ENCODE measurements at regions of chr1 and their contacts with region 1.

Region 1: GRCh38 chr1:186482661-186483255 is 21.8 kb upstream of the PDC start:
- DNase-seq: peak in 1 of 2 experiments; percentile 85
- H3K4me3 ChIP-seq: no peak overlapping the region
- H3K27ac ChIP-seq: no peak overlapping the region
- H3K4me1 ChIP-seq: no peaks in the 10 kb centered on the region
- H3K27me3 ChIP-seq: no peaks in the 10 kb centered on the region
- CTCF ChIP-seq: peak; percentile 74 to 89 (median 81)
- EP300 ChIP-seq: no peak
- POLR2A ChIP-seq: no peak
- RAD21 ChIP-seq: peak; percentile 96 to 99

Region 2: GRCh38 chr1:186337554-186337953 is 145.2 kb before region 1 on chr1:
- CTCF ChIA-PET with region 1: no interaction called
- POLR2A ChIA-PET with region 1: no interaction called
- DNase-seq: no peak
- H3K4me3 ChIP-seq: no peak overlapping the region
- H3K27ac ChIP-seq: no peak overlapping the region
- H3K4me1 ChIP-seq: no peaks in the 10 kb centered on the region
- H3K27me3 ChIP-seq: no peaks in the 10 kb centered on the region
- CTCF ChIP-seq: no peak
- EP300 ChIP-seq: no peak
- POLR2A ChIP-seq: no peak
- RAD21 ChIP-seq: no peak

Region 3: DNA sequence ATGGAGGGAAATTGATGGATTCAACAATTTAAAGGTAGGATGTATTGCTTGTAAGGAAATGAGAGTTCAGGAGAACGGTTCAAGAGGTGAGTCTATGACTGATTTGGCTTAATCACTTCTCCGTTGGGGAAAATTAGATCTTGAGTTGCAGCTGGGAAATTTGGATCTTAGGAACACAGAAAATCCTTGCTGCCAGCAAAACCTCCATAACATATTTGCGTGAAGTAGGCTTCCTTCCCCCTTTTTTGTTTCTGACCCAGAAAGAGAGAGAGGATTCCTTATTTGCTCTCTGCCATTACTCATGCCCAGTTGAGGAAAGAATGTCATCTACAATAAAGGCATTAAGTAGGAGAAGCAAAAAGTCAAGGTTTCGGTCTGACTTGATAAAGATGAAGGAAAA is 51.6 kb after region 1 on chr1:
- CTCF ChIA-PET with region 1: no interaction called
- POLR2A ChIA-PET with region 1: no interaction called
- DNase-seq: no peak
- H3K4me3 ChIP-seq: no peak overlapping the region
- H3K27ac ChIP-seq: no peak overlapping the region
- H3K4me1 ChIP-seq: no peaks in the 10 kb centered on the region
- H3K27me3 ChIP-seq: no peaks in the 10 kb centered on the region
- CTCF ChIP-seq: no peak
- EP300 ChIP-seq: no peak
- POLR2A ChIP-seq: no peak
- RAD21 ChIP-seq: no peak

Region 4: GRCh38 chr1:186985889-186986491 is 503.2 kb after region 1 on chr1:
- CTCF ChIA-PET with region 1: interaction called, 15 read pairs
- POLR2A ChIA-PET with region 1: no interaction called
- DNase-seq: no peak
- H3K4me3 ChIP-seq: no peak overlapping the region
- H3K27ac ChIP-seq: no peak overlapping the region
- H3K4me1 ChIP-seq: 0 out of 7 replicates have a peak, but pooled peaks cover 0 to 2% (median 0%) of the 10 kb centered on the region in 4 experiments
- H3K27me3 ChIP-seq: no peaks in the 10 kb centered on the region
- CTCF ChIP-seq: peak in 2 of 3 experiments; percentile 69 to 70; a peak in 3 of 4 replicates
- EP300 ChIP-seq: no peak
- POLR2A ChIP-seq: no peak
- RAD21 ChIP-seq: peak; percentile 95 to 96